Activated T-helper 2 cell treated with anti-CD3 and anti-CD28 coated beads, Interferon-gamma antibody, Interleukin-2, Interleukin-4, amounts not matched to agents 10 μg/mL and 5 μg/mL and 100 μg/mL, durations not matched to agents 14 hours and 24 hours and 36 hours (primary cell): ENCODE measurements at regions of chr19 and their contacts with region 1.

Region 1: DNA sequence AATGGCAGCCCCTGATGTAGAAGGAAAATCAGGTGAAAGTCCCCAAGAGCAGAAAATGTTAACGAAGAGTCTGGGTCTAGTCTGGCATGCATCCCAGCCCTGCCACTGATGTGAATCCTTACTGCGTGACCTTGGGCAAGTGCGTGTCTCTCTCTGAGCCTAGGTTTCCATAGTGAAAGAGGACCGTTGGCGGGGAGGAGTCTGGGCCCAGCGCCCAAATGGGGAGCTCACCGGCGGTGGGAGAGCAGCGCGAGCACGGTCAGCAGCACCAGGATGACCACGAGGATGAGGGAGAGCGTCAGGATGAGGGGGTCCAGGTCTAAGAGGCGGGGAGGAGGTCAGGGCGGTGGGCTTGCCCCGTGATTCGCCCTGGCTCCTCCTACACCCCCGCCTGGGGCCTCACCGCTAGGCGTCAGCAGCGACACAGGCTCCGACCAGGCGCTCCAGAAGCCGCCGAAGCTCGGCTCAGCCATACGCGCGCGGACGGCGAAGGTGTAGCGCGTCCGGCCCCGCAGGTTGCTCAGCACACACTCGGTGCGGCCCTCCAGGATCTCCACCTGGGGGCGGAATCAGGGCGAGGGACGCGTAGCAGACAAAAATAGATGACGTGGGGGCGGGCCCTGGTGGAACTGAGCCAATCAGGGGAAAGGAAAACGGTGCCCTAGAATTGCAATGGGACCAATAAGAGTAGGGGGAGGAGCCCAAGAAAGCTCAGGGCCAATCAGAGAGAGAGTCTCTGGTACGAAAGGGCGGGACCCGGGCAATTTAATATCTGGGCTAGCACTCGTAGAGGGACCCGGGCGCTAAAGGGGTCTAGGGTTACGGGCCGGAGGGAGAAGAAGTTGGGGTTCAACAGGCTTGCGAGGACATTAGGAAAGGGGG is 3.2 kb downstream of the EPOR start:
- DNase-seq: peak; percentile 97
- H3K4me3 Mint-ChIP-seq: peak overlapping the region; percentile 99
- H3K27ac Mint-ChIP-seq: peak overlapping the region; percentile 100
- H3K4me1 Mint-ChIP-seq: peaks cover 38% of the 10 kb centered on the region
- H3K27me3 Mint-ChIP-seq: peaks cover 12% of the 10 kb centered on the region

Region 2: GRCh38 chr19:11155373-11156120 is 225.3 kb before region 1 on chr19 and contains the start of gene SPC24:
- intact Hi-C with region 1: loop called (anchors 5 kb)
- DNase-seq: peak; percentile 96
- H3K4me3 Mint-ChIP-seq: peak within 1 kb of the TSS; percentile 86
- H3K27ac Mint-ChIP-seq: peak within 1 kb of the TSS; percentile 75
- H3K4me1 Mint-ChIP-seq: peaks cover 19% of the 10 kb centered on the region
- H3K27me3 Mint-ChIP-seq: no peaks in the 10 kb centered on the region
- total RNA-seq, gene SPC24: 38.3 and 38.8 TPM in 2 replicates

Region 3: GRCh38 chr19:11422163-11423021 is 41.5 kb after region 1 on chr19:
- intact Hi-C with region 1: loop called (anchors 5 kb)
- DNase-seq: peak; percentile 73
- H3K4me3 Mint-ChIP-seq: peak overlapping the region; percentile 68
- H3K27ac Mint-ChIP-seq: no peak overlapping the region
- H3K4me1 Mint-ChIP-seq: peaks cover 19% of the 10 kb centered on the region
- H3K27me3 Mint-ChIP-seq: peaks cover 47% of the 10 kb centered on the region

Region 4: GRCh38 chr19:11482384-11483050 is 101.6 kb after region 1 on chr19:
- intact Hi-C with region 1: loop called (anchors 1 kb)
- DNase-seq: peak; percentile 84
- H3K4me3 Mint-ChIP-seq: peak overlapping the region; percentile 81
- H3K27ac Mint-ChIP-seq: peak overlapping the region; percentile 85
- H3K4me1 Mint-ChIP-seq: peaks cover 17% of the 10 kb centered on the region
- H3K27me3 Mint-ChIP-seq: peaks cover 28% of the 10 kb centered on the region

Region 5: GRCh38 chr19:11581740-11582139 is 200.8 kb after region 1 on chr19:
- intact Hi-C with region 1: loop called (anchors 5 kb)
- DNase-seq: peak; percentile 56
- H3K4me3 Mint-ChIP-seq: peak overlapping the region; percentile 74
- H3K27ac Mint-ChIP-seq: peak overlapping the region; percentile 96
- H3K4me1 Mint-ChIP-seq: peaks cover 20% of the 10 kb centered on the region
- H3K27me3 Mint-ChIP-seq: no peaks in the 10 kb centered on the region